PC-9 (cell line): ENCODE measurements at regions of chr9 and their contacts with region 1.

Region 1: GRCh38 chr9:97314503-97314902 is 7.0 kb downstream of the CCDC180 start:
- DNase-seq: no peak
- H3K4me3 ChIP-seq: no peak overlapping the region
- H3K27ac ChIP-seq: no peak overlapping the region
- H3K4me1 ChIP-seq: no peaks in the 10 kb centered on the region
- H3K27me3 ChIP-seq: no peaks in the 10 kb centered on the region
- CTCF ChIP-seq: no peak

Region 2: GRCh38 chr9:97332993-97333392 is 18.5 kb after region 1 on chr9:
- CTCF ChIA-PET with region 1: interaction called, 10 read pairs
- POLR2A ChIA-PET with region 1: no interaction called
- intact Hi-C with region 1: no loop called
- DNase-seq: no peak
- H3K4me3 ChIP-seq: no peak overlapping the region
- H3K27ac ChIP-seq: no peak overlapping the region
- H3K4me1 ChIP-seq: no peaks in the 10 kb centered on the region
- H3K27me3 ChIP-seq: no peaks in the 10 kb centered on the region
- CTCF ChIP-seq: no peak